ENCODE measurements at regions of chr3 and their contacts with region 1.

Region 1: DNA sequence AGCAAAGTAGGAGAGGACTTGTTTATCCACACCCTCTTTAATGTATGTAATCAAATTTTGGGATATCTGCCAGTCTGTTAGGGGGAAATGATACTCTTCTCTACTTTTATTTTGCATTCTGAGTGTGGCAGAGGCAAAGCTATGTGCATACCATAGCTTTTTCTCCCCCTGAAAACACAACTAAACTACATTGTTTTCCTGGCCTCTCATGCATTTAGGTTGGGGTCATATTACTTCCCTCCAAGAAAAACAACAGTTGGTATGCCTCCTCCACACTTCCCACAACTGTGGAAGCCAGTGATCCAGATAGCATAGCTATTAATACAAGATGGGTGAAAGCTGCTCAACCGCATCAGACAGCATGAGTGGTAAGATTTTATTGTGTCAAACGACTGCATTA is 6.9 kb downstream of the RPL15 start:
- DNase-seq: peak; percentile 74
- H3K4me3 ChIP-seq: no peak overlapping the region
- H3K27ac ChIP-seq: no peak overlapping the region
- H3K27me3 ChIP-seq: no peaks in the 10 kb centered on the region
- CTCF ChIP-seq: no peak

Region 2: DNA sequence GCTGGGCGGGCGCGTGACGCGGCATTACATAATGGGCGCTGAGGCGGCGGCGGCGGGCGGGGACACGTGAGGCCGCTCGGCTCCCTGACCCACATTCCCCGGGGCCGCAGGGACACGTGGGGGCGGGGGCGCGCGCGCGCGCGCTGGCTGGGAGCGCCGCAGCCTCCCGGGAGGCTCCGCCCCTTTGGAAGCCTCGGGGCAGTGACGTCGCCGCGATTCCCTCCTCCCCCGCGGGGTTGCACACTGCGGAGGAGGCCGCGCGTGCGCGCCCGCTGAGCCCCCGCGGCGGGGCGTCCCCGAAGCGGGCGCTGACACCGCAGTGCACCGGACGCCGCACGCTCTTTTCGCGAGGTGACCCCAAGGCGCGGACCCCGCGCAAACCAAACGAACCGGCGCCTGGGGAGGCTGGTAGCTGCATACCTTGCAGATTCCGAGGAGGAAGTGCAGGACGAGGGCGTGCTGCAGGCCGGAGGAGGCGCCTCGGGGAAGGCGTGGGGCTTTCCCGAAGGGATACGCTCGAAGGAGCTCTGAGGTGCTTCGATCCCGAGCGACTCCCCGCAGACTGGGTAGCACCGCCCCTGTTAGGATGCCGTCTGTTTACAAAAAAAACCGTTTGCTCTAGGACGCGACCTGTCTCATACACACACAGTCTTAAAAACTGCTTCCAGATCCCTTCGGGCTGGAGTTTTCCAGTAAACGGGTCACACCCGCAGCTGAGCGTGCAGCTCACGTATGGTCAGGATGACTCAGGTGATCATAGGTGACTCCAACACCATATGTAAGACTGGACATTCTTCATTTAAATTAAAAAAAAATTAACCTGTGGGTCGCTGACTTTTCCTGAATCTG is 22.3 kb after region 1 on chr3:
- CTCF ChIA-PET with region 1: no interaction called
- POLR2A ChIA-PET with region 1: interaction called, 17 read pairs
- DNase-seq: peak; percentile 77
- H3K4me3 ChIP-seq: peak overlapping the region; percentile 86
- H3K27ac ChIP-seq: peak overlapping the region; percentile 91
- H3K27me3 ChIP-seq: no peaks in the 10 kb centered on the region
- CTCF ChIP-seq: no peak